Activated CD4-positive, alpha-beta T cell treated with anti-CD3 and anti-CD28 coated beads for 36 hours (primary cell): ENCODE measurements at regions of chr11 and their contacts with region 1.

Region 1: GRCh38 chr11:39209981-39210380 is 2249.5 kb downstream of the LRRC4C start:
- DNase-seq: no peak
- ATAC-seq: no peak
- H3K4me3 Mint-ChIP-seq: no peak overlapping the region
- H3K27ac Mint-ChIP-seq: no peak overlapping the region
- H3K4me1 Mint-ChIP-seq: no peaks in the 10 kb centered on the region
- H3K27me3 Mint-ChIP-seq: no peaks in the 10 kb centered on the region

Region 2: DNA sequence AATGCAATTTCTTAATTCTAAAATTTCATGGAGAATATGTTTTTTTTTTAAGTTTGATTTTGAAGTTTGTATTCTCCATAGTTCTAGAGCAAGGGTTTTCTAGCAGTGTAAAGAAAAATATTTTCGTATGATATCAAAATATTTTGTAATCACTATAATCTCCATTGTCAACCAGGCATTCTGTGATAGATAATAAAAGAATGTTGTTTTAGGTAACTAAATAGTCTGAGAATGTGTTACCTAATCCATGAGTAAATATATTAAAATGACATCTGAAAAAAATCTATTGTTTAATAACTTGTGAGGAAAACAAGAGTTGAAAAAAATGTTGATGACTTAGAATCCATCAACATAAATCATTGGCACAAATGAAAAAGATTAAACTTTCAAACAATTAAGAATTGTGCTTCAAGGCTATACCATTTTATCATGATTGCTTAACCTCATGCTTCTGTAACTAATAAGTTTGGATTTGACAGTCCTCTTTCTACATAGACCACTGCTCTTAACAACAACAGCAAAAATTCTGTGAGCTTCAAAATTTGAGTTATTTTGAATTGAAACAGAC is 37.7 kb after region 1 on chr11:
- CTCF ChIA-PET with region 1: no interaction called
- POLR2A ChIA-PET with region 1: no interaction called
- intact Hi-C with region 1: no loop called
- DNase-seq: no peak
- ATAC-seq: no peak
- H3K4me3 Mint-ChIP-seq: no peak overlapping the region
- H3K27ac Mint-ChIP-seq: no peak overlapping the region
- H3K4me1 Mint-ChIP-seq: no peaks in the 10 kb centered on the region
- H3K27me3 Mint-ChIP-seq: no peaks in the 10 kb centered on the region

Region 3: DNA sequence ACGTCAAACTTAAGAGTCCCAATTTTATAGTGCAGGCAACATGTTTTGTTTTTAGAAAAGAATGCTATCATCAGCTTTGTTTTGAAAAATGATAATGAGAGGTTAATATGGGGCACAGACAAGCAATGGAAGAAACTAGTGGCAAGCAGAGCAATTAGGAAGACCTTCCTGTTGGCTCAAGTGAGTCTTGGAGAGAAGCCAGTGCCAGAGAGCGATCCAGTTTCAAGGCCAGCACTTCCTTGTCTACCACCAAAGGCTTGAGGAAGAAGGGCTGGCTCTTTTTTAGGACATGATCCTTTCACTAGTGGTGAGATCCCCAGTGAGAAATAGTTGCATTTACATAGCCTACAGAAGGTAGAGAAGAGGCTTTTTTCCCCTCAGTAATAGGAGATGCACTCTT is 908.8 kb after region 1 on chr11:
- CTCF ChIA-PET with region 1: no interaction called
- POLR2A ChIA-PET with region 1: no interaction called
- intact Hi-C with region 1: loop called in 1 of 2 experiments (anchors 10 kb)
- DNase-seq: no peak
- ATAC-seq: no peak
- H3K4me3 Mint-ChIP-seq: no peak overlapping the region
- H3K27ac Mint-ChIP-seq: no peak overlapping the region
- H3K4me1 Mint-ChIP-seq: no peaks in the 10 kb centered on the region
- H3K27me3 Mint-ChIP-seq: no peaks in the 10 kb centered on the region